ENCODE measurements at regions of chr12 and their contacts with region 1.

Region 1: GRCh38 chr12:117857632-117858612 is 110.9 kb downstream of the KSR2 start:
- DNase-seq: no peak
- ATAC-seq: peak; percentile 50
- H3K4me3 Mint-ChIP-seq: no peak overlapping the region
- H3K27ac Mint-ChIP-seq: no peak overlapping the region
- H3K4me1 Mint-ChIP-seq: no peaks in the 10 kb centered on the region
- H3K27me3 Mint-ChIP-seq: no peaks in the 10 kb centered on the region
- CTCF ChIP-seq: no peak

Region 2: DNA sequence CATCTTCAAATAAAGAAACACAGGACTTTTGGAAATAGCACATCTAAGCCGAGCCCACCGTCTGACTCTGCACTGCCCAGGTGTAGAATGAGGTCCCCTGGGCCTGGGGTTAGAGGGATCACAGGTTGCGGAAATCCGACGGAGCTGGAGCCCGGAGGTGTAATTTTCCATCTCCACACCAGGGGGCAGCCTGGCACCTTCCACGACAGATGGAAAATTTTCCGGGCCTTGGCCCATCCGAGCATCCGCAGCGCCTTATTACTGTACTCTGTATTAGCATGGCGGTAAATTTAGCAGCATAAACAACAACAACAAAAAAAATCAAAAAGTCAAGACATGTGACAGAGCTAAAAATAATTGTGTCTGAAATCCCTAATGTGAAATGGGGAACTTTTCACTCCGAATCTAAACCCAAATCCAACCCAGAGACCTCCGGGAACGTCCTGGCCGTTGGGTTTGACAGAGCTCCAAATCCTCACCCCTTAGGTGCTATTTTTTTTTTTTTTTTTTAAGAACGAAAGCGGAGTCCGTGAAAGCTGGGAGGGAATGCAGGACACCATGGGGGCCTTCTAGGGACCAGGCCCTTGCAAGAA is 17.0 kb after region 1 on chr12:
- CTCF ChIA-PET with region 1: interaction called, 12 read pairs
- POLR2A ChIA-PET with region 1: no interaction called
- intact Hi-C with region 1: no loop called
- DNase-seq: peak; percentile 44
- ATAC-seq: peak; percentile 73
- H3K4me3 Mint-ChIP-seq: no peak overlapping the region
- H3K27ac Mint-ChIP-seq: no peak overlapping the region
- H3K4me1 Mint-ChIP-seq: peaks cover 8% of the 10 kb centered on the region
- H3K27me3 Mint-ChIP-seq: peaks cover 13% of the 10 kb centered on the region
- CTCF ChIP-seq: peak; percentile 39